ENCODE measurements at regions of chrX and their contacts with region 1.

Region 1: DNA sequence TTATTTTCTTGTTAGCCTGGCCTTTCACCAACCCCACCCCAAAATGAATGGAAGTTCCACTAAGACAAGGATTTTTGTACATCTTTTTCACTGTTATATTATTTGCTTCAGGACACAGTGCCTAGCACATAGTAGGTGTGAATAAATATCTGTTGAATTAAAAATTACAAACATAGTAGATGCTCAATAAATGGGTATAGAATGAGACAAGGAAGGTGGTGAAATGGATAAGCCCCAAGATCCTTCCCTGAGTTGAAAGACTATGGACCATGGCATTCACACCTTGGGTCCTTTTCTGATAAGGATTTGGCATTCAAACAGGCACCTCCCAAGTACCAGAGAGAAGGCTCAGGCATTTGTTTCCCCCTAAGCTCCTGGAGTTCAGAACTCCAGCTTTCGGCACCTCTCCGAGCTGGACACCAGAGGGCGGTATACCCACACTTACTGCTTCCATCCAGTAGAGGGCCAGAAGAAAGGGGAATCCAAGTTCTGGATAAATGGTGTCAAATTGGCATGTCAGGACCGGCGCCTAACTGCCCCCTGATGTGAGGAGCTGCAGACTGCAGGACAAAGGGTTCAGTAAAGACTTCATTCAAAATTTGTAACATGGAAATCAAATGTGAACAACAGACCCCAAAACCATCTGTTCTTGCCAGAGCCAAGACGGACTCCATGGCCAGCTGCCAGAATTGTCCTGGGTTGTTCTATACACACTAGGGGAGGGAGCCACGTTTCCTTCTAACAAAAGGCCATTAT is 193.0 kb downstream of the GPC3 start:
- DNase-seq: peak; percentile 36 to 70
- H3K4me3 ChIP-seq: peak overlapping the region in 1 of 4 experiments; percentile 32; a peak in 2 of 8 replicates
- H3K27ac ChIP-seq: no peak overlapping the region
- H3K4me1 ChIP-seq: peaks cover 0 to 2% (median 0%) of the 10 kb centered on the region in 4 experiments; a peak in 3 of 7 replicates
- H3K27me3 ChIP-seq: no peaks in the 10 kb centered on the region
- CTCF ChIP-seq: peak; percentile 77 to 100 (median 92)
- EP300 ChIP-seq: no peak
- POLR2A ChIP-seq: no peak
- RAD21 ChIP-seq: peak; percentile 88 to 94

Region 2: DNA sequence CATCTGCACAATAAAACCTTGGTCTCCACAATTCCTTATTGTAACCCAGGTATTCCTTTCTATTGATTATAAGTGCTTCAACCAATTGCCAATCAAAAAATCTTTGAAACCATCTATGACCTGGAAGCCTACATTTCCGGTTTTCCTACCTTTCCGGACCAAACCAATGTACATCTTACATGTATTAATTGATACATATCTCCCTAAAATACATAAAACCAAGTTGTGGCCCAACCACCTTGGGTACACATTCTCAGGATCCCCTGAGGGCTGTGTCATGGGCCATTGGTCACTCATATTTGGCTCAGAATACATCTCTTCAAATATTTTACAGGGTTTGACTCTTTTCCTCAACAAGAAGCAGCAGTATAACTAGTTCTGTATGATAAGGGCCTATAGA is 171.6 kb before region 1 on chrX:
- CTCF ChIA-PET with region 1: no interaction called
- POLR2A ChIA-PET with region 1: no interaction called
- DNase-seq: no peak
- H3K4me3 ChIP-seq: no peak overlapping the region
- H3K27ac ChIP-seq: no peak overlapping the region
- H3K4me1 ChIP-seq: no peaks in the 10 kb centered on the region
- H3K27me3 ChIP-seq: no peaks in the 10 kb centered on the region
- CTCF ChIP-seq: no peak
- EP300 ChIP-seq: no peak
- POLR2A ChIP-seq: no peak
- RAD21 ChIP-seq: no peak

Region 3: DNA sequence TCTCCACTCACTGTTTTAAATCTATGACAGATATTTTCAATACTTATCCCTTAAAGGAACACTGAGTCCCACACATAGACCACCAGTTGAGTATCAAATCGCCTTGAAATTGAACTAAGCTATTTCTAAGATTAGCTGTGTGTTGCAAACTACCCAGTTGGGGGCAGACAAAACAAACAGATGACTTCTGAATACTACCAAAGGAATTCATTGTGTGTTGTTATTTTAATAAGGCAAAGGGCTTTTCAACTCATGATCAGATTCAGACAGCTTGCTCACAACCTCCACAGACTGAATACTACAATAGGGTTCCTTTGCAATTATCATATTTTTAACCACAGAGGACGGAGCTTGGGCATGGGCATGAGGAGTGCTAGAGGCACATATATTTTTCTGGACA is 94.1 kb before region 1 on chrX:
- CTCF ChIA-PET with region 1: no interaction called
- POLR2A ChIA-PET with region 1: no interaction called
- DNase-seq: no peak
- H3K4me3 ChIP-seq: no peak overlapping the region
- H3K27ac ChIP-seq: no peak overlapping the region
- H3K4me1 ChIP-seq: peaks cover 0 to 2% (median 1%) of the 10 kb centered on the region in 4 experiments; a peak in 3 of 7 replicates
- H3K27me3 ChIP-seq: no peaks in the 10 kb centered on the region; a peak in 1 of 7 replicates
- CTCF ChIP-seq: no peak
- EP300 ChIP-seq: no peak
- POLR2A ChIP-seq: no peak
- RAD21 ChIP-seq: peak; percentile 19 to 36; a peak in 3 of 4 replicates

Region 4: GRCh38 chrX:133771086-133771646 is 21.2 kb before region 1 on chrX:
- CTCF ChIA-PET with region 1: no interaction called
- POLR2A ChIA-PET with region 1: no interaction called
- DNase-seq: no peak
- H3K4me3 ChIP-seq: no peak overlapping the region
- H3K27ac ChIP-seq: no peak overlapping the region
- H3K4me1 ChIP-seq: no peaks in the 10 kb centered on the region
- H3K27me3 ChIP-seq: no peaks in the 10 kb centered on the region
- CTCF ChIP-seq: no peak
- EP300 ChIP-seq: no peak
- POLR2A ChIP-seq: no peak
- RAD21 ChIP-seq: no peak

Region 5: GRCh38 chrX:133838761-133839676 is 46.6 kb after region 1 on chrX:
- CTCF ChIA-PET with region 1: interaction called, 11 read pairs
- POLR2A ChIA-PET with region 1: no interaction called
- DNase-seq: peak; percentile 3 to 66
- H3K4me3 ChIP-seq: no peak overlapping the region
- H3K27ac ChIP-seq: no peak overlapping the region
- H3K4me1 ChIP-seq: no peaks in the 10 kb centered on the region; a peak in 2 of 7 replicates
- H3K27me3 ChIP-seq: no peaks in the 10 kb centered on the region
- CTCF ChIP-seq: peak in 2 of 3 experiments; percentile 51 to 60; a peak in 3 of 4 replicates
- EP300 ChIP-seq: no peak
- POLR2A ChIP-seq: no peak
- RAD21 ChIP-seq: peak; percentile 26 to 37; a peak in 3 of 4 replicates

Region 6: GRCh38 chrX:133921764-133922389 is 129.5 kb after region 1 on chrX:
- CTCF ChIA-PET with region 1: interaction called, 15 read pairs
- POLR2A ChIA-PET with region 1: no interaction called
- DNase-seq: peak; percentile 38 to 68
- H3K4me3 ChIP-seq: no peak overlapping the region
- H3K27ac ChIP-seq: no peak overlapping the region
- H3K4me1 ChIP-seq: peaks cover 0 to 4% (median 3%) of the 10 kb centered on the region in 4 experiments; a peak in 4 of 7 replicates
- H3K27me3 ChIP-seq: no peaks in the 10 kb centered on the region
- CTCF ChIP-seq: peak; percentile 69 to 86 (median 73)
- EP300 ChIP-seq: no peak
- POLR2A ChIP-seq: no peak
- RAD21 ChIP-seq: peak; percentile 74 to 87

Region 7: DNA sequence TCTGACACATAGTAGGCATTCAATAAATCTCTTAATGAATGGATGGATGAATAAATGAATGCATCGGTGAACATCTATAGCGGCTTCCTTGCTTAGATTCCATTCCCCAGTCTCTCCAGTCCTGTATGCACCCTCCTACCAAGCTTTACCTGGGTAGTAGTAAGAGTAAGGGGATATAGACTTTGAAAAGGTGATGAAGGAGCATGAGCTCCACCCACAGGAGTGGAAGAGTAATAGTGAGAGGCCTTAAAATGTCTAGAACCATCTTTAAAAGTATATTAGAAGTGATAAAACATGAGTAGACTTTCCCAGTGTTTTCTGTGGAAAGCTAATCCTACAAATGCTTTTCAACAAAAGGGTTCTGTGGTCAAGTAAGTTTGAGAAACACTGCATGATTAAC is 228.5 kb after region 1 on chrX:
- CTCF ChIA-PET with region 1: interaction called, 28 read pairs
- POLR2A ChIA-PET with region 1: no interaction called
- DNase-seq: no peak
- H3K4me3 ChIP-seq: no peak overlapping the region
- H3K27ac ChIP-seq: no peak overlapping the region
- H3K4me1 ChIP-seq: no peaks in the 10 kb centered on the region; a peak in 1 of 7 replicates
- H3K27me3 ChIP-seq: no peaks in the 10 kb centered on the region
- CTCF ChIP-seq: peak in 2 of 3 experiments; percentile 35 to 41; a peak in 2 of 4 replicates
- EP300 ChIP-seq: no peak
- POLR2A ChIP-seq: no peak
- RAD21 ChIP-seq: peak; percentile 74 to 75

Region 8: DNA sequence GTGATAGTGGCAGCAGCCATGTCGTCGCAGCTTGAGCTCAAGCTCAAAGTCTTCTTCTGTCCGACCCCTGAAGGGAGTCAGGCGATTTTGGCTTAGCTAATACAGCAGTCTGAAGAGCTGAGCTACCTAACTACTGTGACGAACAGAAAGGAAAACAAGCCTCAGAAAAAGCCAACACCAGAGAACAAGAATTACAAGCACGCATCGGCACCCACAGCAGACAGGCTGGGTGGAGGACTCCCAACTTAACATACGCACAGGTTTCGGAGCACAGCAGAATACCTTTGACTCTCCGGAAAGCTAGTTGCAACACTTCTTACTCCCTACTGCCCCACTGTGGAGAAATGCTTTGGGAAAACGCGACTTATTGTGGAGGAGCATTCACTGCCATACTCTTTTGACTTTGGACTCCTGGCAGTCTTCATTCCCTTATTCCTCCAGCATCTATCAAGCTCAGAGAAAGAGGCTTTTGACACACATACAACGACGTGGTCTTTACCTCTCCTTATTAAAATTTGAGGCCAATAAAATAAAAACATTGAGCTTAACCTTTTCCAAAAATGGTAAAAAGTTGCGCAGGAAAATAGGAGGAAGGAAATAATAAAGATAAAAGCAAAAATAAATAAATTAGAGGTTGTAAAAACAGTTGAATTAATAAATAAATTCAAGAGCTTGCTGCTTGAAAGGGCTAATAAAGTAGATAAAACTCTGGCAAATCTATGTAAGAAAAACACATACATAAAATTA is 234.4 kb after region 1 on chrX:
- CTCF ChIA-PET with region 1: interaction called, 28 read pairs
- POLR2A ChIA-PET with region 1: no interaction called
- DNase-seq: peak; percentile 9 to 48
- H3K4me3 ChIP-seq: peak overlapping the region; percentile 1 to 52 (median 19); a peak in 5 of 8 replicates
- H3K27ac ChIP-seq: no peak overlapping the region
- H3K4me1 ChIP-seq: no peaks in the 10 kb centered on the region; a peak in 1 of 7 replicates
- H3K27me3 ChIP-seq: no peaks in the 10 kb centered on the region
- CTCF ChIP-seq: peak in 2 of 3 experiments; percentile 60 to 63; a peak in 3 of 4 replicates
- EP300 ChIP-seq: no peak
- POLR2A ChIP-seq: no peak
- RAD21 ChIP-seq: peak; percentile 58 to 65

Measured in H1 (cell line).